ENCODE measurements at regions of chr2 and their contacts with region 1.

Region 1: DNA sequence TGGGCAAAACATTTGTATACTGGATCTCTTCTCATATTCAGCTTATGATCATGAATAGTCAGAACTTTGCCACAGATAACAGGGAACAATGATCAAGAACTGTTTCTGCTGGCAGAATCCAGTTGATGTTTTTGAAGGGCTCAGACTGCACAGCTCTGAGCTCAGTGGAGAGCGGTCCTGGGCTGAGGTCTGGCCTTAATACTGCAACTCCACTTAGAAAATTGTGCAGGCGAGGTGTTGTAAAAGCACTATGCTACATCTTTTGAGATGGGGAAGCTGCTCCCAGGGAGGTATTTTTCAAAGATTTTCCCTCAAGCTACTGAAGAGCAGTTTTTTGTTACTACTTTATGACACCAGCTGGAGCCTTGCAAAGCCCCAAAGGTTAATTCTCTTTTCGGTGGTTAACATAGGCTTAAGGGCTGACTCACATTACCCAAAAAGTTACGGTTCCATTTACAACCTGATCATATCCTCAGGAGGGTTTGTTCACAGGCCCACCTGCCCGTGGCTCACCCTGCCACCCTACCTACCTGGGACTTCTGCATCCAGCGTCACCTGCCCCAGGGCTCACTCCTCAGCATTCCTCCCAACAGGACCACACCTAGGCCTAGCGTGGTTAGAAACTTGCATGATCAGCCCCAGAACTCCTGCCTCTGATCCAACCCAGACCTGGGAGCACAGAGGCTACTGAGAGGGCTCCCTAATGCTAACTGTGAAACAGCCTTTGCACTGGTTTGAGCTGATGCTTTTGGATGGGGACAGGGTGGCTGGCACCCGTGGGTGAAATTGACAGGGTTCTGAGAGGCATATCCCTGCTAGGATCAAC is 114.4 kb downstream of the NCK2 start:
- DNase-seq: peak; percentile 53 to 80
- H3K4me3 ChIP-seq: no peak overlapping the region
- H3K27ac ChIP-seq: peak overlapping the region; percentile 44
- H3K4me1 ChIP-seq: peaks cover 44% of the 10 kb centered on the region
- H3K27me3 ChIP-seq: no peaks in the 10 kb centered on the region
- CTCF ChIP-seq: no peak

Region 2: GRCh38 chr2:105744091-105744908 is 114.8 kb before region 1 on chr2:
- CTCF ChIA-PET with region 1: no interaction called
- POLR2A ChIA-PET with region 1: no interaction called
- intact Hi-C with region 1: loop called (anchors 10 kb)
- DNase-seq: peak; percentile 53 to 59
- H3K4me3 ChIP-seq: peak overlapping the region; percentile 56
- H3K27ac ChIP-seq: no peak overlapping the region
- H3K4me1 ChIP-seq: peaks cover 16% of the 10 kb centered on the region
- H3K27me3 ChIP-seq: peaks cover 9% of the 10 kb centered on the region; the same call in 1 of the 2 replicates
- CTCF ChIP-seq: no peak

Region 3: GRCh38 chr2:105876191-105876590 is 17.1 kb after region 1 on chr2:
- CTCF ChIA-PET with region 1: no interaction called
- POLR2A ChIA-PET with region 1: no interaction called
- intact Hi-C with region 1: loop called (anchors 1 kb)
- DNase-seq: no peak
- H3K4me3 ChIP-seq: no peak overlapping the region
- H3K27ac ChIP-seq: no peak overlapping the region
- H3K4me1 ChIP-seq: 0 out of 2 replicates have a peak, but pooled peaks cover 6% of the 10 kb centered on the region
- H3K27me3 ChIP-seq: no peaks in the 10 kb centered on the region
- CTCF ChIP-seq: no peak

Region 4: DNA sequence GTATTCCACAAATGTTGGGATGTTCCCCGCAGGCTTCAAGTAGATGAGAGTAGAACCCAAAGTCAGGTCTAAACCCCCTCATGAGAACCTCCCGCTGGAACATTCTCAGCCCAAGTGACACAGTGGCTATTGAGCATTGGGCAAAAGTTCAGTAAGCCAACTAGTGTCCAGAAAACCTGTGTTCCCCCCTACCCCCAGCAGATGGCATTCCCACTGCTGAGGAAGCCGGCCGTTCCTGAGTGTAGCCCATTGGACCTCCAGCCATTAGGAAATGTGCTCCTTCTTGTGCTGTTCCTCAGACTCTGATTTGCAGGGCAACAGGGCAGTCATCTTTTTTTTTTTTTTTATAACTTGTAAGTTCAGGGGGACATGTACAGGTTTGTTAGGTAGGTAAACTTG is 37.7 kb after region 1 on chr2:
- CTCF ChIA-PET with region 1: no interaction called
- POLR2A ChIA-PET with region 1: no interaction called
- intact Hi-C with region 1: no loop called
- DNase-seq: no peak
- H3K4me3 ChIP-seq: no peak overlapping the region
- H3K27ac ChIP-seq: no peak overlapping the region
- H3K4me1 ChIP-seq: no peaks in the 10 kb centered on the region
- H3K27me3 ChIP-seq: no peaks in the 10 kb centered on the region
- CTCF ChIP-seq: no peak